Lower leg skin (tissue), 4 donors: ENCODE measurements at regions of chr12 and their contacts with region 1.

Region 1: DNA sequence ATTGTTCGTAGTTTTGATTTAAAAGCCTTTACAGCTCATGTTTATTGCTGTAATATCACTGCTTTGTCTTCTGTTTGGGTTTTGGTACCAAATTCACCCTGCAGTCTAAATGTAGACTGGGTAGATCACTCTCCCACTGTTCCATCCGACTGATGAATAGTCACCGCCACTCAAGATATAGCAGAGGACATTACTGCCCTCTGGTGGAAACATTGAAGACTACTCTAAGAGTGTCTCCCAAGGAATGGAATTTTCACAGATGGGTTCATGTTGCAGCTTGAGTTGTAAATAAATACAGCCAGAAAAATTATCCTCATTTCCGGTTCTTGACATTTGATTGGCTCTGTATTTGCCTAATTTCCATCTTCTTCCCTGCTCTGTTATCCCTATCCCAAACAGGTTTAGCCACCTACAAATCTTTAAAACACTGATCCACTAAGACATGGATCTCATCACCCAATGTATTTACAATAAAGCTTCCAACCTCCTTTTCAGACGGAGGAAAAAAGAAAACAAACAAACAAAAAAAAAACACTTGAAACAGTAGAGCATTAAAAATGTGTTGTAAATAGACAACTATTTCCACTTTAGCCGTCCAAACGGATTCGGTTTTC is 198.3 kb upstream of the CPNE8 start:
- DNase-seq: peak in 1 of 2 donors; percentile 18
- H3K4me3 ChIP-seq: no peak overlapping the region
- CTCF ChIP-seq: peak in 1 of 3 donors; percentile 27
- POLR2A ChIP-seq: no peak

Region 2: GRCh38 chr12:38332814-38333213 is 770.8 kb before region 1 on chr12:
- intact Hi-C with region 1: loop called (anchors 2 kb)
- DNase-seq: no peak
- H3K4me3 ChIP-seq: no peak overlapping the region
- CTCF ChIP-seq: no peak
- POLR2A ChIP-seq: no peak

Region 3: GRCh38 chr12:38921025-38921677 is 182.5 kb before region 1 on chr12:
- intact Hi-C with region 1: loop called (anchors 10 kb)
- DNase-seq: peak in 1 of 2 donors; percentile 26
- H3K4me3 ChIP-seq: no peak overlapping the region
- CTCF ChIP-seq: no peak
- POLR2A ChIP-seq: no peak